ENCODE measurements at regions of chr9 and their contacts with region 1.

Region 1: GRCh38 chr9:6412487-6413364 is at the start of gene UHRF2:
- DNase-seq: peak; percentile 93
- ATAC-seq: peak; percentile 96
- H3K4me3 ChIP-seq: peak within 1 kb of the TSS; percentile 90 to 92
- H3K27ac ChIP-seq: peak within 1 kb of the TSS; percentile 83
- H3K4me1 ChIP-seq: peaks cover 8 to 18% of the 10 kb centered on the region in 2 experiments; a peak in 3 of 4 replicates
- H3K27me3 ChIP-seq: no peaks in the 10 kb centered on the region
- CTCF ChIP-seq: no peak
- POLR2A ChIP-seq: peak; percentile 50
- RAD21 ChIP-seq: no peak
- total RNA-seq, gene UHRF2: 40.6 TPM

Region 2: DNA sequence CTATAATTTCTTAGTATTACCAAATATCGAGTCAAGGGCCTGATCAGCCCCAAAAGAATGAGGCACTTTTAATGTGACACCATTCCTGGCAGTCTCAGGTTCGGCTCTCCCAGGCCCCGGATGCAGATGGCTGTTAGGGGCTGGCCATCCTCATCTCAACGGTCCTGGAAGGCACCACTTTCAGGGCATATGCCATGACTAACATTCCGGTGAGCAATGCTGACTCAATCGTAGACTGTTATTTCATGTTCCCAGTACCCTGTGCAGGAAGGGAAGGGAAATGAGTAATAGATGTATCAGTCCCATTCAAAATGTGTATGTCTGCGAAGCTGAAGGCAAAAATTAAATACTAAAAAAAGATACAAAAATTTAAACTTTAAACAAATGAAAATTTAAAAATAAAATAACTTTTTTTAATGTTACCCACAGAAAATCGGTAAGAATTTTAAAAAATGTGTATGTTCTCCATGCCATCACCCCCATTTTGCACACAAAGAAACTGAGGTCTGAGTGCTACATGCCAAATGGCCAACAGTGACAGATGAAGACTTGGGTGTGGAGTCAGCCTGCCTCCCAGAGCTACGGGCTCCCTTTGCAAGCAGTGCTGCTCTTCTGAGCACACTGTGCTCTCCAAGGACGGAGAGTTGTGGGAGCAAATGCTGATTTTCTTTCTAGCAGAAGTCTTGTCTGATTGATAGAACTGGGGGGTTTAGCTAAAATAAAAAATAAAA is 153.8 kb after region 1 on chr9:
- CTCF ChIA-PET with region 1: no interaction called
- POLR2A ChIA-PET with region 1: no interaction called
- RAD21 ChIA-PET with region 1: no interaction called
- intact Hi-C with region 1: loop called (anchors 2 kb)
- DNase-seq: peak; percentile 95
- ATAC-seq: peak; percentile 85
- H3K4me3 ChIP-seq: peak overlapping the region; percentile 24 to 28
- H3K27ac ChIP-seq: peak overlapping the region; percentile 93
- H3K4me1 ChIP-seq: peaks cover 33 to 56% of the 10 kb centered on the region in 2 experiments
- H3K27me3 ChIP-seq: no peaks in the 10 kb centered on the region
- CTCF ChIP-seq: no peak
- POLR2A ChIP-seq: no peak
- RAD21 ChIP-seq: no peak

Region 3: GRCh38 chr9:6598249-6598725 is 185.6 kb after region 1 on chr9:
- CTCF ChIA-PET with region 1: no interaction called
- POLR2A ChIA-PET with region 1: no interaction called
- RAD21 ChIA-PET with region 1: no interaction called
- intact Hi-C with region 1: no loop called
- DNase-seq: no peak
- ATAC-seq: no peak
- H3K4me3 ChIP-seq: no peak overlapping the region
- H3K27ac ChIP-seq: no peak overlapping the region
- H3K4me1 ChIP-seq: no peaks in the 10 kb centered on the region
- H3K27me3 ChIP-seq: no peaks in the 10 kb centered on the region
- CTCF ChIP-seq: no peak
- POLR2A ChIP-seq: no peak
- RAD21 ChIP-seq: no peak

Region 4: GRCh38 chr9:6757456-6758247 is 344.9 kb after region 1 on chr9 and contains the start of gene KDM4C:
- CTCF ChIA-PET with region 1: no interaction called
- POLR2A ChIA-PET with region 1: no interaction called
- RAD21 ChIA-PET with region 1: no interaction called
- intact Hi-C with region 1: loop called (anchors 10 kb)
- DNase-seq: peak; percentile 90
- ATAC-seq: peak; percentile 89
- H3K4me3 ChIP-seq: peak within 1 kb of the TSS; percentile 81 to 91
- H3K27ac ChIP-seq: peak within 1 kb of the TSS; percentile 91
- H3K4me1 ChIP-seq: peaks cover 7 to 23% of the 10 kb centered on the region in 2 experiments; a peak in 3 of 4 replicates
- H3K27me3 ChIP-seq: no peaks in the 10 kb centered on the region
- CTCF ChIP-seq: no peak
- POLR2A ChIP-seq: peak; percentile 94
- RAD21 ChIP-seq: no peak
- total RNA-seq, gene KDM4C: 16.8 TPM